T-cell (primary cell): ENCODE measurements at regions of chr1 and their contacts with region 1.

Region 1: GRCh38 chr1:91885716-91886506 is at the start of gene TGFBR3:
- DNase-seq: peak; percentile 53 to 84 (median 71)
- ATAC-seq: peak; percentile 76 to 83 (median 80)
- H3K4me3 ChIP-seq: peak within 1 kb of the TSS; percentile 79 to 83
- H3K4me3 Mint-ChIP-seq: peak within 1 kb of the TSS; percentile 96 to 100 (median 99)
- H3K27ac ChIP-seq: peak within 1 kb of the TSS; percentile 53
- H3K27ac Mint-ChIP-seq: peak within 1 kb of the TSS; percentile 86 to 89
- H3K4me1 ChIP-seq: peaks cover 8 to 30% of the 10 kb centered on the region in 2 experiments
- H3K4me1 Mint-ChIP-seq: peaks cover 34 to 53% (median 46%) of the 10 kb centered on the region in 3 donors
- H3K27me3 ChIP-seq: peaks cover 0 to 8% of the 10 kb centered on the region in 2 experiments
- H3K27me3 Mint-ChIP-seq: no peaks in the 10 kb centered on the region
- total RNA-seq, gene TGFBR3: 17.5 to 65.4 (median 36.4) TPM

Region 2: DNA sequence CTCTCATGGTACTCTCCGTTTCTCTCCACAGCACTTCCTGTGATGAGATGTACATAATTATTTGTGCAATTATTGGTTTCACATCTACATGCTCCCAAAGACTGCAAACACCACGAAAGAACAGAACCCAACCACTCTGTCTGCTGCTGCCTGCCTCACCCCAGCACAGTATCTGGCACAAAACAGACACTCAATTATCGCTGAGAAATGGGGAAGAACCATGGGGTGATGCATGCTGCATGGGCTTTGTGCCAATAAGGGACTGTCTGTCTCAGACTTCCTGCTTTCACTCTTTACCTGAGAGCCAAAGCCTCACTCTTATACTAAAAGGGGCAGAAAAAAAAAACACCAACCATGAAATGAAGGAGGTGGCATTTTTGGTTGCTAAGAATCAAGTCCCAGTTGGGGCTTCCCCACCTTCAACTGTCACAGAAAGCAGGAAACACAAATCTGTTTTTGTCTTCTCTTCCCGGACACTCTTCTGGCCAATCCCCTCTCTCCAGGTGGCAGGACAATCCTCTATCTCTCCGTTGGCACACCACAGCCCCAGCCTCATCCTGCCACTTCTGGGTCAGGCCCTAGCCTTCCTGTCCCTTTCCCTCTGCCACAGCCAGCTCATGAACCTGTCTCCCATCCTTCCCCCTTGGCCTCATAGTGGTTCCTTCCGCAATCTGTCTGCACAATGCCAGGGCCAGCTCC is 81.9 kb before region 1 on chr1:
- CTCF ChIA-PET with region 1: interaction called, 7 to 15 read pairs
- POLR2A ChIA-PET with region 1: interaction called, 4 to 5 read pairs
- DNase-seq: peak; percentile 56 to 94 (median 73)
- ATAC-seq: peak; percentile 61 to 67 (median 64)
- H3K4me3 ChIP-seq: peak overlapping the region; percentile 19 to 38
- H3K4me3 Mint-ChIP-seq: peak overlapping the region; percentile 69 to 78 (median 76)
- H3K27ac ChIP-seq: peak overlapping the region; percentile 98
- H3K27ac Mint-ChIP-seq: peak overlapping the region; percentile 95 to 96
- H3K4me1 ChIP-seq: peaks cover 21 to 47% of the 10 kb centered on the region in 2 experiments
- H3K4me1 Mint-ChIP-seq: peaks cover 48 to 74% (median 55%) of the 10 kb centered on the region in 3 donors
- H3K27me3 ChIP-seq: no peaks in the 10 kb centered on the region
- H3K27me3 Mint-ChIP-seq: no peaks in the 10 kb centered on the region

Region 3: GRCh38 chr1:92831762-92832536 is 946.0 kb after region 1 on chr1 and contains the start of gene RPL5:
- CTCF ChIA-PET with region 1: interaction called in 1 of 2 experiments, 4 read pairs
- POLR2A ChIA-PET with region 1: interaction called in 1 of 2 experiments, 10 read pairs
- DNase-seq: peak; percentile 92 to 99 (median 94)
- ATAC-seq: peak; percentile 86 to 92 (median 87)
- H3K4me3 ChIP-seq: peak within 1 kb of the TSS; percentile 91 to 97
- H3K4me3 Mint-ChIP-seq: peak within 1 kb of the TSS; percentile 97 to 100 (median 99)
- H3K27ac ChIP-seq: peak within 1 kb of the TSS; percentile 92
- H3K27ac Mint-ChIP-seq: peak within 1 kb of the TSS; percentile 92 to 99
- H3K4me1 ChIP-seq: peaks cover 18 to 22% of the 10 kb centered on the region in 2 experiments
- H3K4me1 Mint-ChIP-seq: peaks cover 45 to 51% (median 49%) of the 10 kb centered on the region in 3 donors
- H3K27me3 ChIP-seq: no peaks in the 10 kb centered on the region
- H3K27me3 Mint-ChIP-seq: no peaks in the 10 kb centered on the region
- total RNA-seq, gene RPL5: 1,327 to 1,558 (median 1,433) TPM